ENCODE measurements at regions of chr1 and their contacts with region 1.

Region 1: GRCh38 chr1:153816283-153816889 is 41.2 kb downstream of the SLC27A3 start:
- DNase-seq: no peak
- H3K4me3 ChIP-seq: no peak overlapping the region
- CTCF ChIP-seq: no peak

Region 2: DNA sequence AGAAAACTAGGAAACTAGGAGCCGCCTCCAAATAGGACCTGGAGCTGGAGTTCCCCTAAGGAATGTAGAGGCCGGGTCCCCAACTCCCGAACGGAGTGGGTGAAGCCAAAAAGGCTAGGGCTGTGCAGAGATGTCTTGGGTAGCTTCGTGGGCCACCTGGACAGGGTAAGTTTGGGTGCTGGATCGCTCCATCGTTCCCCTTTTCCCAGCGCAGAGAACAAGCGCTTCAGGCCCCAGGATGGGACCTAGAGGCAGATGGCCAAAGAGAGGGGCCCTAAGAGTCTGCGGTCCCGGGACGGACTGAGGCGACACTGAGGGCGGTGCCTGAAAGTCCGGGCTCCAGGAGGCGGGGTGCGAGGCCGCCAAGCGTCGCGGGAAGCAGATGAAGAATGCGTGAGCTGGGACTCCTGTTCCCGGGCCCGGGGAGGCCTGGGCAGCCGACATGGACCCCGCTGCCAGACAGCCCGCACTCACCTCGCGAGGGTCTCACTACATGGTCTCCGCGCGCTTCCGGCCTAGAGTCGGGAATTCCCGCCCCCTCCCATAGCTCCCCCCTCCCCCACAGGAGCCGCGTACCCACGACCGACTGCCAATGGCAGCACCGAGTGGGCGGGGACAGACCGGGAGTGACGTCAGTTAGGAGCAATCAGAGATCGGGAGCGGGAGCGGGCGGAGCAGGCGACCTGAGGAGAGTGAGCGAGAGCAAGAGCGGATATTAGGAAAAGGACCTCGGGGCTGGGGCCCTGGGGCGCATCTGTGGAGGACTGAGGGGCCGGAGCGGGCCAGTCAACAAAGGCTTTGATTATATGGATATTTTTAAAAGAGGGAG is 146.8 kb after region 1 on chr1 and contains the start of gene SLC39A1:
- in situ Hi-C with region 1: loop called (anchors 5 kb)
- DNase-seq: peak; percentile 91
- H3K4me3 ChIP-seq: peak within 1 kb of the TSS; percentile 89
- CTCF ChIP-seq: no peak